PC-9 (cell line): ENCODE measurements at regions of chr17 and their contacts with region 1.

Region 1: GRCh38 chr17:63126587-63126986 is 160.6 kb downstream of the TANC2 start:
- DNase-seq: no peak
- H3K4me3 ChIP-seq: no peak overlapping the region
- H3K27ac ChIP-seq: no peak overlapping the region; the same call in 1 of the 2 replicates
- H3K4me1 ChIP-seq: no peaks in the 10 kb centered on the region
- H3K27me3 ChIP-seq: no peaks in the 10 kb centered on the region
- CTCF ChIP-seq: no peak

Region 2: GRCh38 chr17:63189082-63189481 is 62.5 kb after region 1 on chr17:
- CTCF ChIA-PET with region 1: no interaction called
- POLR2A ChIA-PET with region 1: interaction called, 12 read pairs
- intact Hi-C with region 1: no loop called
- DNase-seq: no peak
- H3K4me3 ChIP-seq: no peak overlapping the region
- H3K27ac ChIP-seq: 0 out of 2 replicates have a peak overlapping the region, but pooled peaks have one; percentile 11
- H3K4me1 ChIP-seq: no peaks in the 10 kb centered on the region
- H3K27me3 ChIP-seq: no peaks in the 10 kb centered on the region
- CTCF ChIP-seq: no peak

Region 3: DNA sequence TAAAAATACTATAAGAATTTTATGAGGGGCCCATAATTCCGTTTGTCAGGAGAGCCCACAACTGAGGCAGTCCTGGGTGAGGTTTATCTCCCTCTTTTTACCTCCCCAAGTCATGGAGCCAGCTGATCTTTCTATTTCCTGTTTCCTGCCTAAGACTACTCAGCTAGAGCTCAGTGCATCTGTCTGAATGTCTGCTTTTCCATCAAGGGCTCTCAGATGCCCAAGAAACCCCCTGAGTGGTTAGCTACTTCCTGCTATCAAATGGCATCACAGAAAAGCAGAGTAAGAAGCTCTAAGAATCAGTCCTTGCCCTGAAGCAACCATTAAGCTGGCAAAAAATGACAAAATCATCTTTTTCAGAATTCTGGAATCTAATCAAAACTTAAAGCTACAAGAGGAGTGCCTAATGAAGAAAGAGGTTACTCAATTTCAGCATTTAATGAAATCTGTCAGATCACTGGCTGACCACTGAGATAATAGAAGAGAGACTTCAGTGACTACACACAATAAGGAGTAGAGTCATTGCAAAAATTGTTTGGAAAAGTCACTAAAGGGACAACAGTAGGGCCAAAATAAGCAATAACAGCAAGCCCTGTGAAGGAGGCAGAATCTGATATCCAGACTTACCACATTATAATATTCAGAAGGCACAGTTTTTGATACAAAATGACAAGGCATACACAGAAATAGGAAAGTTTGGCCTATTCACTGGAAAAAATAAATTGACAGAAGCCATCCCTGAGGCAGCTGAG is 169.4 kb after region 1 on chr17:
- CTCF ChIA-PET with region 1: no interaction called
- POLR2A ChIA-PET with region 1: no interaction called
- intact Hi-C with region 1: no loop called
- DNase-seq: no peak
- H3K4me3 ChIP-seq: no peak overlapping the region
- H3K27ac ChIP-seq: no peak overlapping the region
- H3K4me1 ChIP-seq: no peaks in the 10 kb centered on the region
- H3K27me3 ChIP-seq: no peaks in the 10 kb centered on the region
- CTCF ChIP-seq: no peak